MCF 10A (cell line): ENCODE measurements at regions of chr20 and their contacts with region 1.

Region 1: DNA sequence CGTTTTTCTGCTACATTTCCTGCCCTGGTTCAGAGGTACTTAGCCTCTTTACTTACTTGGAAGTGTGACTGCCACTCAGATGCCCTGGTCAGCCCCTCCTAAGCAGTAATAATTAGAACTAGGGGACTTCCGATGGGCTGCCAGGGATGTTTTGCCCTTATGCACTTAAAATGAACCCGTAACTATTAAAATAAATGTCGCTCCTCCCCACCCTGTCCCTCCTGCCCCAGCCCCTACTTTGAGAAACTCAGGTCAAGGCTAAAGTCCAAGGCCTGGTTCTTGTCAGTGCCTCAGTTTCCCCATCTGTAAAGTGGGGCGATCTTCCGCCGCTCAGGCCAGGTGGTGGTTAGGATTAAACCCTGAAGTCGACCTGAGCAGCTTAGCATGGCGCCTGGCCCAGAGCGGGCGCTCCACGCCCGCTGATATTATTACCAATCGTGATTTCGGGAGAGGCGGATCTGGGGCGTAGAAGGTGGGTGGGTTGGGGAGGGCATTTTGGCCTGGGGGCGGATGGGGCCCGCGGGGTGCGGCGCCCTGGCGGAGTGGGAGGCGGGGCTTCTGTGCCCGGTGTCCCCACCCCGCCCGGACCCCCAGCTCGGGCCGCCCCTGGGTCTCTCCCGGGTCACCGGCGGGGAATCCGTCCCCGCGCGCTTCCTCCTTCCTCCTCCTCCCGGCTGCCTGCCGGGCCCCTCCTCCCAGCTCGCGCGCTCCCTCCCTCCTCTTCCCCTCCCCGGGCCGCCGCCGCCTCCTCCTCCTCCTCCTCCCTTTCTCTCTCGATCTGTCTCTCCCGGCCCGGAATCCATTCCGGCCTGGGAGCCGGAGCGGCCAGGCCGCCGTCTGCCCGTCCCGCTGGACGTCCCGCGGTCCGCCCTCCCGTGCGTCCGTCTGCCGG is at the start of gene SRC:
- DNase-seq: peak; percentile 74
- H3K4me3 Mint-ChIP-seq: peak within 1 kb of the TSS; percentile 75
- H3K27ac Mint-ChIP-seq: peak within 1 kb of the TSS; percentile 54
- H3K4me1 Mint-ChIP-seq: peaks cover 25% of the 10 kb centered on the region
- H3K27me3 Mint-ChIP-seq: no peaks in the 10 kb centered on the region
- CTCF ChIP-seq: no peak
- total RNA-seq, gene SRC: 28.1 and 29.5 TPM in 2 replicates

Region 2: GRCh38 chr20:36760647-36761046 is 584.9 kb before region 1 on chr20:
- CTCF ChIA-PET with region 1: no interaction called
- POLR2A ChIA-PET with region 1: no interaction called
- intact Hi-C with region 1: no loop called
- DNase-seq: no peak
- H3K4me3 Mint-ChIP-seq: no peak overlapping the region
- H3K27ac Mint-ChIP-seq: no peak overlapping the region
- H3K4me1 Mint-ChIP-seq: no peaks in the 10 kb centered on the region
- H3K27me3 Mint-ChIP-seq: no peaks in the 10 kb centered on the region
- CTCF ChIP-seq: no peak

Region 3: DNA sequence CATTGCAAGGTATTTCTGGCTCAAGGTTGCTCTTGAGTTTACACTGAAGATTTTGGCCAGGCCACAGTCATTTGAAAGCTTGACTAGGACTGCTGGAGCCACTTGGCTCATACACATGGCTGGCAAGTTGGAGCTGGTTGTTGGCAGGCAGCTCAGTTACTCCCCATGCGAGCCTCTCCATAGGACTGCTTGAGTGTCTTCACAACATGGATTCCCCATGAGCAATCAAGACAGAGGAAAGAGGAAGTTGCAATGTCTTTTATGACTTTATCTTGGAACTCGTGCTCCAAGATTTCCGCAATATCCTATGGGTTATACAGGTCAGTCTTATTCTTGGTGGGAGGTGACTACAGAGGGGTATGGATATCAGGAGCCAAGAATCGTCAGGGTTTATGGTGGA is 57.5 kb before region 1 on chr20:
- CTCF ChIA-PET with region 1: interaction called, 4 read pairs
- POLR2A ChIA-PET with region 1: interaction called, 28 read pairs
- intact Hi-C with region 1: no loop called
- DNase-seq: peak; percentile 81
- H3K4me3 Mint-ChIP-seq: peak overlapping the region; percentile 85
- H3K27ac Mint-ChIP-seq: peak overlapping the region; percentile 98
- H3K4me1 Mint-ChIP-seq: peaks cover 23% of the 10 kb centered on the region
- H3K27me3 Mint-ChIP-seq: no peaks in the 10 kb centered on the region
- CTCF ChIP-seq: no peak

Region 4: DNA sequence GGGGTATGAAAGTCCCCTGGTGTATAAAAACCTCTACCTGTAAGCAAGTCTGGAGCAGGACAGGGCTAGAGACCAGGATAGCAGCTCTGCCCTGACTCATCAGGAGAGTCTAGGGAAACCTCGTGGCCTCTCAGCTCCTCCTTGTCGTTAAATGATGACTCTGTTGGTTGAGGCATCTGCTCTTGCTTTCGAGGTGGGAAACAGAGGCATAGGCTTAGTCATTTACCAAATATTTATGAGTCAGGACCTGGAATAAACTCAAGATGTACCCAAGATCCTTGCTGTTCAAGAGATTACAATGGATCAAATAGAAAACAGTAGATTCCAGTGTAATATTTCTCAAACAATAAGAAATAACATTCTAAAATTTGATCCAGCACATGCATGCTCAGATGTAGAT is 50.6 kb before region 1 on chr20:
- CTCF ChIA-PET with region 1: no interaction called
- POLR2A ChIA-PET with region 1: interaction called, 28 read pairs
- intact Hi-C with region 1: loop called (anchors 2 kb)
- DNase-seq: peak; percentile 98
- H3K4me3 Mint-ChIP-seq: peak overlapping the region; percentile 49
- H3K27ac Mint-ChIP-seq: peak overlapping the region; percentile 67
- H3K4me1 Mint-ChIP-seq: peaks cover 54% of the 10 kb centered on the region
- H3K27me3 Mint-ChIP-seq: no peaks in the 10 kb centered on the region
- CTCF ChIP-seq: no peak

Region 5: DNA sequence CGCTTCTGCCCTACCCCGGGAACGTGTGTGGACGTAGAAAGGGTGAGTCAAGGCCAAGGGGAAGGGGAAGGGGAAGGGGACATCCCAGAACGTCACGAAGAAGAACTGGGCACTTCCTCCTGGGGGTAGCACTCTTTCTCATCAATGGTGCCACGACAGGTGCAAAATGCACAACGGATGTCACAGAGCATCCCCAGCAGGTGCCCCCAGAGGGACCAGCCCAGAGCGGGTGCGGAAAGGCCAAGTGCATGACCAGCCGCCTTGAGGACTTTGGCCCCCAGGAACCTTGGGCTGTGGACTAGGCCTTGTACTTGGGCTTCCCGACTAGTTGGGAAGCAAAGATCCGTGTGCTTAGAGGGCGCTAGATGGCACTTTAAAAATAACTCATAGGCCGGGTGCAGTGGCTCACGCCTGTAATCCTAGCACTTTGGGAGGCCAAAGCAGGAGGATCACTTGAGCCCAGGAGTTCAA is 11.7 kb before region 1 on chr20:
- CTCF ChIA-PET with region 1: interaction called, 5 read pairs
- POLR2A ChIA-PET with region 1: interaction called, 30 read pairs
- intact Hi-C with region 1: no loop called
- DNase-seq: no peak
- H3K4me3 Mint-ChIP-seq: no peak overlapping the region
- H3K27ac Mint-ChIP-seq: no peak overlapping the region
- H3K4me1 Mint-ChIP-seq: peaks cover 17% of the 10 kb centered on the region
- H3K27me3 Mint-ChIP-seq: no peaks in the 10 kb centered on the region
- CTCF ChIP-seq: no peak

Region 6: DNA sequence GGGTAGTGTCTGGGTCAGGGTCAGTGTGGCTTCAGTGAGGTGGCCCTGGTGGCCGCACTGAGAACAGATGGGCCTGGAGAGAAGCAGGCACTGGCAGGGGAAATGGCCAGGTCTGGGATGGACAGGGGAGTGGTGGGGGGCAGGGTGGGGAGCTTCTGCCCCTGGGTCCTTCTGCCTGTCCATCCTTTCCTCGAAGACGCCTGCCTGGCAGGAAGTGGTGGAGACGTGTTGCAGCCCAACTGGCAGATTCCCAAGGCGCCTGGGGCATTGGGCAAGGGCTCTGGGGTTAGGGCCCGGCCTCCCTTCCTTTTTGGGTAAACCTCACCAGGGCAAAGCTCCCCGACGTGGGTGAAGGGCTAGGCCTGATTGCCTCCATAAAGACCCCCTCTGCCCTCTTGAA is 10.8 kb after region 1 on chr20:
- CTCF ChIA-PET with region 1: interaction called, 8 read pairs
- POLR2A ChIA-PET with region 1: interaction called, 15 read pairs
- intact Hi-C with region 1: no loop called
- DNase-seq: peak; percentile 75
- H3K4me3 Mint-ChIP-seq: no peak overlapping the region
- H3K27ac Mint-ChIP-seq: no peak overlapping the region
- H3K4me1 Mint-ChIP-seq: peaks cover 37% of the 10 kb centered on the region
- H3K27me3 Mint-ChIP-seq: no peaks in the 10 kb centered on the region
- CTCF ChIP-seq: no peak

Region 7: DNA sequence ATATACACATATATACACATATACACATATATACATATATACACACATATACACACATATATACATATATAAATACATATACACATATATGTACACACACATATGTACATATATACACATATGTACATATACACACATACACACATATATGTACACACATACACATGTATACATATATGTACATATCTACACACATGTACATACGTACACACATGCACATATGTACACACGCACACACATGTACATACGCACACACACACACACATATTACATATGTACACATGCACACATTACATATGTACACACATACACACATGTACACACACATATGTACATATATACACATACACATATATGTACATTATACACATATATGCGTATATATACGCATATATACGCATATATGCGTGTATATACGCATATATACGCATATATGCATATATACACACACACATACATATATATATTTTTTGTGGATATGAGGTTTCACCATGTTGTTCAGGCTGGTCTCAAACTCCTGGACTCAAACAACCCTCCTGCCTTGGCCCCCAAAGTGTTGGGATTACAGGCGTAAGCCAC is 27.5 kb after region 1 on chr20:
- CTCF ChIA-PET with region 1: no interaction called
- POLR2A ChIA-PET with region 1: no interaction called
- intact Hi-C with region 1: no loop called
- DNase-seq: no peak
- H3K4me3 Mint-ChIP-seq: no peak overlapping the region
- H3K27ac Mint-ChIP-seq: no peak overlapping the region
- H3K4me1 Mint-ChIP-seq: no peaks in the 10 kb centered on the region
- H3K27me3 Mint-ChIP-seq: no peaks in the 10 kb centered on the region
- CTCF ChIP-seq: no peak

Region 8: DNA sequence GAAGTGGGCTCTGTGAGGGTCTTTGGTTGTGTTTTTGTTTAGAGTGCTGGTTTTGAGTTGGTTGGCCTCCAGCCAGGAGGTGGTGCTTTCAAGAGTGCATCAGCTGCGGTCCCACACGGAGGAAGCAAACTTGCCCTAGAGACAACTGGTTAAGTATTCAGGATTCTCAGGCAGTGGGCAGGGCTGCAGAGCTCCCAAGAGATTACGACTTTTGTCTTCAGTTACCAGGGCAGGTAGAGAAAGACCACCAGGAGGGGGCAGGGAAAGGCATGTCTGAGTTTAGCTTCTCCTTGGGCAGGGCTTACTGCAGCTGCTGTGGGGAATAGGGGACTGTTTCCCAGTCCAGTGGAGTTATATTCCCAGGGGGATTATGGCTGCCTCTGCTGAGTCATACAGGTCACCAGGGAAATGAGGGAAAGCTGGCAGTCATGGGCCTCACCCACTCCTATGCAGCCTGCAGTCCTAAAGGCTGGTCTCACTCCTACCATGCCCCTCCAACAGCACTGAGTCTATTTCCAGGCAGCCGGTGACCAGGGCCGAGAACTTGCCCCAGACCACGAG is 623.3 kb after region 1 on chr20:
- CTCF ChIA-PET with region 1: no interaction called
- POLR2A ChIA-PET with region 1: no interaction called
- intact Hi-C with region 1: no loop called
- DNase-seq: peak; percentile 54
- H3K4me3 Mint-ChIP-seq: no peak overlapping the region
- H3K27ac Mint-ChIP-seq: no peak overlapping the region
- H3K4me1 Mint-ChIP-seq: peaks cover 16% of the 10 kb centered on the region
- H3K27me3 Mint-ChIP-seq: peaks cover 6% of the 10 kb centered on the region
- CTCF ChIP-seq: no peak